Transverse colon (tissue), 4 donors: ENCODE measurements at regions of chr4 and their contacts with region 1.

Region 1: DNA sequence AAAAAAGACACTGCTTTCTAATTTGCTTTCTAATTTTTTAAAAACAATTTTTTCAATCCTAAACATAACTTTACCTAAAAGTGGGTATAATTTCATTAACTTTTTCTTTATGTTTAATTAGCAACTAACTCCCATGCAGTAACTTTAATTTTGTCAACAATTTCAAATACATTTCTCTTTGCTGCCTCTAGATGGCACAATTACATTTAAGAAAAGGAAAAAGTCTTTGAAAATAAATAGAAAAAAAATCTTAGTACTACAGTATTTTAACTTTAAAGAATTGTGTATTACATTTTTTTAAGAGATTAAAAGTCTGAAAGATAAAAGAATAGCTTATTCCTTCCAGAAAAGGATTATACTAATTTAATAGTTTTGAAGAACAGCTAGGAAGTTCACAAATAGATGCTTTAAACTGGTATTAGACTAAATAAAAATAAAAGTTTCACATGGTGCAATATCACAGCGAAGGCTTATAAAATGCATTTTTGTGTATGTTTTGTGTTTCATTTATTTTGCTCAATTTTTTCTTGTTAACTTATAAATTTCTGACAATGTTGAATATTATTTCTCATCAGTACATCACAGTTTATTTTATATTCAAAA is 105.1 kb downstream of the ADGRA3 start:
- DNase-seq: no peak
- H3K4me3 ChIP-seq: no peak overlapping the region
- H3K27ac ChIP-seq: no peak overlapping the region
- H3K4me1 ChIP-seq: no peaks in the 10 kb centered on the region
- H3K27me3 ChIP-seq: no peaks in the 10 kb centered on the region
- CTCF ChIP-seq: peak; percentile 48 to 69 (median 59)
- EP300 ChIP-seq: no peak
- POLR2A ChIP-seq: no peak

Region 2: GRCh38 chr4:22607382-22607781 is 196.6 kb after region 1 on chr4:
- in situ Hi-C with region 1: loop called (anchors 5 to 25 kb)
- intact Hi-C with region 1: no loop called
- DNase-seq: peak; percentile 56
- H3K4me3 ChIP-seq: no peak overlapping the region
- H3K27ac ChIP-seq: no peak overlapping the region
- H3K4me1 ChIP-seq: no peaks in the 10 kb centered on the region
- H3K27me3 ChIP-seq: no peaks in the 10 kb centered on the region
- CTCF ChIP-seq: peak; percentile 53 to 69 (median 62)
- EP300 ChIP-seq: no peak
- POLR2A ChIP-seq: no peak

Region 3: GRCh38 chr4:22678940-22679854 is 268.5 kb after region 1 on chr4:
- in situ Hi-C with region 1: loop called in 2 of 4 experiments (anchors 10 to 25 kb)
- intact Hi-C with region 1: no loop called
- DNase-seq: no peak
- H3K4me3 ChIP-seq: no peak overlapping the region
- H3K27ac ChIP-seq: peak overlapping the region in 3 of 4 donors; percentile 16 to 61 (median 59)
- H3K4me1 ChIP-seq: peaks cover 7 to 23% (median 12%) of the 10 kb centered on the region in 4 donors
- H3K27me3 ChIP-seq: no peaks in the 10 kb centered on the region
- CTCF ChIP-seq: no peak
- EP300 ChIP-seq: no peak
- POLR2A ChIP-seq: no peak

Region 4: DNA sequence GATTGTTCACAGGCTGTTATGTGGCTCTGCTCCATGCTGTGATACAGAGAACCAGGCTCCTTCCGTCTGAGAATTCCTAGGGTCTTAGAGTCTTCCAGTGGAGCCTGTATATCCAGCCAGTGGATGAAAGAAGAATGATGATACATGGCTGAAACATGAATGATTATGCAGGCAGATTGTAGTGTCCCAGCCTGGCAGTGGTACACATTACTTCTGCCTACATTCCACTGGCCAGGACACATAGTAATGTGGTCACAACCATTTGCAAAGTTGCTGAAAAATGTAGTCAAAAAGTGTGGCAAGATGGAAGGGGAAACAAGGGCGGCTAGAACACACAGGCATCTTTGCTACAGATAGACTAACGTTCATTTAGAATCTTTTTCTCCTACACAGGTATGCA is 277.5 kb after region 1 on chr4:
- in situ Hi-C with region 1: loop called (anchors 5 to 25 kb)
- intact Hi-C with region 1: loop called (anchors 5 kb)
- DNase-seq: no peak
- H3K4me3 ChIP-seq: no peak overlapping the region
- H3K27ac ChIP-seq: no peak overlapping the region
- H3K4me1 ChIP-seq: peaks cover 0 to 13% (median 5%) of the 10 kb centered on the region in 4 donors
- H3K27me3 ChIP-seq: no peaks in the 10 kb centered on the region
- CTCF ChIP-seq: no peak
- EP300 ChIP-seq: no peak
- POLR2A ChIP-seq: no peak